HCT116 (cell line): ENCODE measurements at regions of chr12 and their contacts with region 1.

Region 1: GRCh38 chr12:32400866-32401265 is 1.5 kb downstream of the FGD4 start:
- DNase-seq: no peak
- ATAC-seq: no peak
- H3K4me3 ChIP-seq: peak overlapping the region; percentile 66 to 83
- H3K27ac ChIP-seq: peak overlapping the region; percentile 94; the same call in 1 of the 2 replicates
- H3K4me1 ChIP-seq: peaks cover 13 to 23% of the 10 kb centered on the region in 2 experiments
- H3K27me3 ChIP-seq: no peaks in the 10 kb centered on the region
- CTCF ChIP-seq: no peak
- POLR2A ChIP-seq: no peak
- RAD21 ChIP-seq: no peak

Region 2: GRCh38 chr12:32444895-32445294 is 44.0 kb after region 1 on chr12:
- CTCF ChIA-PET with region 1: no interaction called
- POLR2A ChIA-PET with region 1: interaction called, 3 read pairs
- RAD21 ChIA-PET with region 1: no interaction called
- intact Hi-C with region 1: loop called (anchors 1 kb)
- DNase-seq: peak; percentile 86
- ATAC-seq: peak; percentile 73
- H3K4me3 ChIP-seq: no peak overlapping the region; a peak in 1 of 4 replicates
- H3K27ac ChIP-seq: peak overlapping the region; percentile 16; the same call in 1 of the 2 replicates
- H3K4me1 ChIP-seq: peaks cover 30 to 55% of the 10 kb centered on the region in 2 experiments
- H3K27me3 ChIP-seq: no peaks in the 10 kb centered on the region
- CTCF ChIP-seq: no peak
- POLR2A ChIP-seq: no peak
- RAD21 ChIP-seq: 0 out of 2 replicates have a peak, but pooled peaks have one; percentile 7

Region 3: GRCh38 chr12:32843528-32844095 is 442.7 kb after region 1 on chr12:
- CTCF ChIA-PET with region 1: no interaction called
- POLR2A ChIA-PET with region 1: no interaction called
- RAD21 ChIA-PET with region 1: no interaction called
- intact Hi-C with region 1: no loop called
- DNase-seq: no peak
- ATAC-seq: no peak
- H3K4me3 ChIP-seq: no peak overlapping the region
- H3K27ac ChIP-seq: no peak overlapping the region
- H3K4me1 ChIP-seq: no peaks in the 10 kb centered on the region
- H3K27me3 ChIP-seq: no peaks in the 10 kb centered on the region
- CTCF ChIP-seq: no peak
- POLR2A ChIP-seq: no peak
- RAD21 ChIP-seq: no peak